ENCODE measurements at regions of chr22 and their contacts with region 1.

Region 1: GRCh38 chr22:22802339-22802970 is 85.2 kb upstream of the IGLL5 start:
- DNase-seq: peak; percentile 70
- ATAC-seq: peak; percentile 68
- H3K4me3 Mint-ChIP-seq: no peak overlapping the region
- H3K27ac Mint-ChIP-seq: no peak overlapping the region
- H3K4me1 Mint-ChIP-seq: peaks cover 38% of the 10 kb centered on the region
- H3K27me3 Mint-ChIP-seq: no peaks in the 10 kb centered on the region

Region 2: DNA sequence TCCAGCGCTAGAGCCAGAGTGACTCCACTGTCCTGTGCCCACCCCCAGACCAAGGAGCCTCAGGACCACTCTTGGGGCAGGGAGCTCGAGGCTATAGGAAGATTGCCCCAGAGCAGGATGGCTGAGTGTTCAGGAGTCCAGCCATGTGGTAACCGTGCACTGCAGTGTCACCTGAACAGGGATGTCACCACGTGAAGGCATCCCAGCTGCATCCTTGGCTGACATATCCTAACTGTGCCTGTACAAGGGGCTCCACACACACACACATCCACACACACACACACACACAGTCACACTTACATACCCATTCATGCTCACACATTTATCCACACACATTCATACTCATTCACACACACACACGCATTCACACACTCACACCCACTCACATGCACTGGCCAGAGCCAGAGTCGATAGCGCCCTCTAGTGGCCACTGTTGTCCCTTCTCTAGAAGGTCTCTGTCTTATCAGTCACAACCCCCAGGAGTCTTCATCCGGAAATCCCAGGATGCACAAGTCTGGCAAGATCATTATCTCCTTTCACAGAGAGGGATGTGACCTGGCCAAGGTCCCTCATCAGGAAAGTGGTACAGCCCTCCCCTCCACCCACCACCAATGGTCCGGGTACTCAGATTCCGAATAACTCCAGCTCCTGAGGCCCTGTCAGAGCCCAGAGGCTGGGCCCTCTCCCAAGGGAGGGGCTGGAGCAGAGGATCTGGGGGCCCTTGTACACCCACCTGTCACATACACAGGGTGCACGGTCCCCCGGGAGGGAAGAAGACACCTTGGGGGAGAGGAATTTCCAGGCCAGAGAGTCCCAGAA is 140.3 kb after region 1 on chr22:
- CTCF ChIA-PET with region 1: interaction called, 4 read pairs
- POLR2A ChIA-PET with region 1: no interaction called
- intact Hi-C with region 1: loop called in 1 of 2 experiments (anchors 2 kb)
- DNase-seq: peak; percentile 92
- ATAC-seq: peak; percentile 90
- H3K4me3 Mint-ChIP-seq: no peak overlapping the region
- H3K27ac Mint-ChIP-seq: no peak overlapping the region
- H3K4me1 Mint-ChIP-seq: peaks cover 2% of the 10 kb centered on the region
- H3K27me3 Mint-ChIP-seq: no peaks in the 10 kb centered on the region